CD8-positive, alpha-beta memory T cell (primary cell): ENCODE measurements at regions of chr6 and their contacts with region 1.

Region 1: GRCh38 chr6:31541658-31542521 is at the start of gene DDX39B:
- DNase-seq: peak; percentile 90 to 97 (median 94)
- H3K4me3 ChIP-seq: peak within 1 kb of the TSS; percentile 100
- H3K4me3 Mint-ChIP-seq: peak within 1 kb of the TSS; percentile 96 to 99 (median 98)
- H3K27ac ChIP-seq: peak within 1 kb of the TSS; percentile 100
- H3K27ac Mint-ChIP-seq: peak within 1 kb of the TSS; percentile 99 to 100 (median 99)
- H3K4me1 ChIP-seq: peaks cover 49% of the 10 kb centered on the region
- H3K4me1 Mint-ChIP-seq: peaks cover 59 to 61% (median 61%) of the 10 kb centered on the region in 3 donors
- H3K27me3 ChIP-seq: no peaks in the 10 kb centered on the region
- H3K27me3 Mint-ChIP-seq: no peaks in the 10 kb centered on the region
- total RNA-seq, gene DDX39B: 643 to 658 TPM

Region 2: DNA sequence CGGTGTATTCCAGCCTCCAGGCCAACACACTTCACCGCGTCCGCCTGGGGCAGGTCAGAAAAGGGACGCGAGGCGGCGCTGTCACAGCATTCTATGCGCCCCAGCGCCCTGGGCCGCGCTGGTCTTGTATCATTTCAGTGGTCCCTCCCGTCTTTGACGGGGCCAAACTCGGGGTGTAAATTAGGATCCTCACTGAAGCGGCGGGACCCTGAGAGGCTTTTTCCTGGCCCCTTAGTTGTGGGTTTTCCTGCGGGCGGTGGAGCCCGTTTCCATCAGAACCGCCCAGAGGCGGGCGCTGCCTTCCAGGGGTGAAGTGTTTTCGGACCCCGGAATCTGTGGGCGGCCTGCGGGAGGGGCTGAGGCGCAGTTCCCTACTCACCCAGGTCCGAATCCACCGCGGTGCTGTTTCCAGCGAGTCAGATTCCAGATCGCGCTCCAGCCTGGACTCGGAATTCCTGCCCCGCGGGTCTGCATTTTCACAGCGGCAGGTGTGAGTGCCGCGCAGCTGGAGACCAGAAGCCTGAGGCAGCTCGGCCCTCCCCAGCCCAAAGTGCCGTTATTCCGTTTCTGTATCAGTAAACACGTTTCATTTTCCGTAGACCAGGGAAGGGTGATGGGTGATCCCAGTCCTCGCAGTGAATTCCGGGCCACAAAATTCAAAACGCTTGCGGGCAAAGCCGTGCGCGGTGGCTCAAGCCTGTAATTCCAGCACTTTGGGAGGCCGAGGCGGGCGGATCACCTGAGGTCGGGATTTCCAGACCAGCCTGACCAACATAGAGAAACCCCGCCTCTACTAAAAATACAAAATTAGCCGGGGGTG is 47.8 kb before region 1 on chr6:
- CTCF ChIA-PET with region 1: interaction called, 57 read pairs
- POLR2A ChIA-PET with region 1: interaction called, 28 read pairs
- DNase-seq: peak; percentile 46 to 77 (median 62)
- H3K4me3 ChIP-seq: peak overlapping the region; percentile 93
- H3K4me3 Mint-ChIP-seq: peak overlapping the region; percentile 78 to 99 (median 93)
- H3K27ac ChIP-seq: peak overlapping the region; percentile 81
- H3K27ac Mint-ChIP-seq: peak overlapping the region; percentile 45 to 97 (median 88)
- H3K4me1 ChIP-seq: peaks cover 31% of the 10 kb centered on the region
- H3K4me1 Mint-ChIP-seq: peaks cover 47 to 62% (median 59%) of the 10 kb centered on the region in 3 donors
- H3K27me3 ChIP-seq: no peaks in the 10 kb centered on the region
- H3K27me3 Mint-ChIP-seq: no peaks in the 10 kb centered on the region

Region 3: DNA sequence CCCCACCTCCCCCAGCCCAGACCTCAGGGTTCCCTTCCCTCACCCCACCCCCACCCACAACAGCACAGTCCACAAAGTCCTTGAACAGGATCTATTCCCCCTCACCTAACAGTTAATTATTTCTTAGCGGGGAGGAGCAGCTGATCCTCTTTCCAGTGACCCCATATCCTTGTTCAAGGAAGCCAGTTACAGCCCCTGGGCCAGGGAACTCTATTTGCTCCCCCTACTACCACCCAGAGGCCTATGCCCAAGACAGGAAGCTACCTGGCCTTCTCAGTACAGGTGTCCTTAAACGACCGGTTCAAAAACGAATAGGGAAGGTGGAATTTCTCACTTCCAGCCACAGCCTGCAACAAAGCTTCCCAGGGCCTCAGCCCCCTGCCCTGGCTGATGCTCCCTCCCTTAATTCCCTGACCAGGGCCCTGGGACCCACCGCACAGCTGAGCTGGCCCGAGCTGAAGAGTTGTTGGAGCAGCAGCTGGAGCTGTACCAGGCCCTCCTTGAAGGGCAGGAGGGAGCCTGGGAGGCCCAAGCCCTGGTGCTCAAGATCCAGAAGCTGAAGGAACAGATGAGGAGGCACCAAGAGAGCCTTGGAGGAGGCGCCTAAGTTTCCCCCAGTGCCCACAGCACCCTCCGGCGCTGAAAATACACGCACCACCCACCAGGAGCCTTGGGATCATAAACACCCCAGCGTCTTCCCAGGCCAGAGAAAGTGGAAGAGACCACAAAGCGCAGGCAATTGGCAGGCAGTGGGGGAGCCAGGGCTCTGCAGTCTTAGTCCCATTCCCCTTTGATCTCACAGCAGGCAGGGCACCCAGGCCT is 12.3 kb before region 1 on chr6:
- CTCF ChIA-PET with region 1: interaction called, 5 read pairs
- POLR2A ChIA-PET with region 1: interaction called, 12 read pairs
- DNase-seq: no peak
- H3K4me3 ChIP-seq: no peak overlapping the region
- H3K4me3 Mint-ChIP-seq: no peak overlapping the region
- H3K27ac ChIP-seq: no peak overlapping the region
- H3K27ac Mint-ChIP-seq: peak overlapping the region in 4 of 8 donors; percentile 18 to 72 (median 48)
- H3K4me1 ChIP-seq: no peaks in the 10 kb centered on the region
- H3K4me1 Mint-ChIP-seq: peaks cover 14 to 23% (median 21%) of the 10 kb centered on the region in 3 donors
- H3K27me3 ChIP-seq: no peaks in the 10 kb centered on the region
- H3K27me3 Mint-ChIP-seq: no peaks in the 10 kb centered on the region

Region 4: GRCh38 chr6:31580807-31581433 is 39.0 kb after region 1 on chr6:
- CTCF ChIA-PET with region 1: interaction called, 576 read pairs
- POLR2A ChIA-PET with region 1: interaction called, 9 read pairs
- DNase-seq: peak; percentile 83 to 91 (median 87)
- H3K4me3 ChIP-seq: peak overlapping the region; percentile 93
- H3K4me3 Mint-ChIP-seq: peak overlapping the region; percentile 98 to 100 (median 99)
- H3K27ac ChIP-seq: peak overlapping the region; percentile 85
- H3K27ac Mint-ChIP-seq: peak overlapping the region; percentile 87 to 100 (median 96)
- H3K4me1 ChIP-seq: peaks cover 80% of the 10 kb centered on the region
- H3K4me1 Mint-ChIP-seq: peaks cover 70 to 88% (median 80%) of the 10 kb centered on the region in 3 donors
- H3K27me3 ChIP-seq: no peaks in the 10 kb centered on the region
- H3K27me3 Mint-ChIP-seq: peaks cover 0 to 1% of the 10 kb centered on the region in 2 donors